ENCODE measurements at regions of chr9 and their contacts with region 1.

Region 1: DNA sequence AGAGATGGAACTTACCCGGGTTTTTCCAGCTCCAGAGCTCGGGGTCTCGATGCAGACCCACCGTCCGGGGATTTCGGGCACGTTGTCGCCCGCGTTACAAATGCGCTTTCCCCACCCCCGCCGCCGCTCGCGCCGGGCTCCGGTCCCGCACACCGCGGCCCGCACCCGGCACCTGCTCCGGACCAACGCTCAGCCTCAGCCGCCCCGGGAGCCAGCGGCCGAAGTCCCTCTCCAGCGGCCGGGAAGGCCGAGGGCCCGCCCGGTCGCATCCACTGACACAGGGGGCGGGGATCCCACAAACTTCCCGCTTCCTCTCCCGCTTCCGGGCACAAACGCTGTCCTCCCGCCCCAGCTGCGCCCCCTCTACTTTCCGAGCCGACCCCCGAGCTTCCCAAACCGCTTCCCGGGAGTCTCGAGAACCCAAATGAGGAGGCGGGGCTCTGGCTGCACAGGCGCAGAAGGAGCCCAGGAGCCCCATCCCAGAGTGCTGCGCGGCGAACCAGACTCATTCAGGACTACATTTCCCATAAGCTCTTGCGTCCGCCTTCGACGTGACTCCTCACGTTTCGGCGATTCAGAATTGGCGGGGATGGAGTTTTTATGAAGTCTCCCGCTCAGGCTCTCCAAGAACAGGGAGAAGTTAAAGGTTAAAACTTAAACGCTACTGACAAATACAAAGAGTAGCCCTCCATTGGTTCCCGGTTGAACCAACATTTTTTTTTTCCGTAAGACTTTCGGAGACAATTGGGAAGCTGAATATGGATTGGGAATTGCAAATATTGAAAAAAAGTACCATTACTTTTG is at the start of gene ZNF782:
- DNase-seq: peak; percentile 77 to 93
- ATAC-seq: peak; percentile 84 to 91 (median 91)
- H3K4me3 ChIP-seq: peak within 1 kb of the TSS; percentile 94
- H3K4me3 Mint-ChIP-seq: peak within 1 kb of the TSS; percentile 100
- H3K27ac ChIP-seq: peak within 1 kb of the TSS; percentile 74
- H3K27ac Mint-ChIP-seq: peak within 1 kb of the TSS; percentile 96 to 99
- H3K4me1 ChIP-seq: peaks cover 12% of the 10 kb centered on the region
- H3K4me1 Mint-ChIP-seq: peaks cover 33 to 37% of the 10 kb centered on the region in 2 donors
- H3K27me3 ChIP-seq: no peaks in the 10 kb centered on the region
- H3K27me3 Mint-ChIP-seq: peaks cover 0 to 4% of the 10 kb centered on the region in 2 donors
- CTCF ChIP-seq: no peak
- total RNA-seq, gene ZNF782: 7.3 to 10.1 (median 7.4) TPM

Region 2: GRCh38 chr9:96777426-96777864 is 76.8 kb before region 1 on chr9:
- intact Hi-C with region 1: loop called (anchors 5 kb)
- DNase-seq: no peak
- ATAC-seq: no peak
- H3K4me3 ChIP-seq: peak overlapping the region; percentile 73
- H3K4me3 Mint-ChIP-seq: peak overlapping the region; percentile 100
- H3K27ac ChIP-seq: peak overlapping the region; percentile 74
- H3K27ac Mint-ChIP-seq: peak overlapping the region; percentile 94 to 97
- H3K4me1 ChIP-seq: peaks cover 11% of the 10 kb centered on the region
- H3K4me1 Mint-ChIP-seq: peaks cover 26 to 42% of the 10 kb centered on the region in 2 donors
- H3K27me3 ChIP-seq: no peaks in the 10 kb centered on the region
- H3K27me3 Mint-ChIP-seq: no peaks in the 10 kb centered on the region
- CTCF ChIP-seq: no peak

Region 3: GRCh38 chr9:96875461-96876364 is 21.4 kb after region 1 on chr9:
- intact Hi-C with region 1: no loop called
- DNase-seq: peak in 1 of 2 donors; percentile 52
- ATAC-seq: peak in 2 of 3 donors; percentile 22 to 27
- H3K4me3 ChIP-seq: peak overlapping the region; percentile 26
- H3K4me3 Mint-ChIP-seq: peak overlapping the region; percentile 62
- H3K27ac ChIP-seq: peak overlapping the region; percentile 56
- H3K27ac Mint-ChIP-seq: no peak overlapping the region
- H3K4me1 ChIP-seq: peaks cover 9% of the 10 kb centered on the region
- H3K4me1 Mint-ChIP-seq: peaks cover 16 to 20% of the 10 kb centered on the region in 2 donors
- H3K27me3 ChIP-seq: peaks cover 34% of the 10 kb centered on the region
- H3K27me3 Mint-ChIP-seq: peaks cover 40 to 64% of the 10 kb centered on the region in 2 donors
- CTCF ChIP-seq: no peak

Region 4: GRCh38 chr9:97398999-97399758 is 544.9 kb after region 1 on chr9:
- intact Hi-C with region 1: loop called (anchors 1 kb)
- DNase-seq: peak; percentile 70 to 82
- ATAC-seq: peak; percentile 83 to 96 (median 94)
- H3K4me3 ChIP-seq: no peak overlapping the region
- H3K4me3 Mint-ChIP-seq: no peak overlapping the region
- H3K27ac ChIP-seq: no peak overlapping the region
- H3K27ac Mint-ChIP-seq: peak overlapping the region in 1 of 2 donors; percentile 40
- H3K4me1 ChIP-seq: peaks cover 33% of the 10 kb centered on the region
- H3K4me1 Mint-ChIP-seq: peaks cover 0 to 5% of the 10 kb centered on the region in 2 donors
- H3K27me3 ChIP-seq: no peaks in the 10 kb centered on the region
- H3K27me3 Mint-ChIP-seq: peaks cover 7 to 21% of the 10 kb centered on the region in 2 donors
- CTCF ChIP-seq: peak; percentile 89

Region 5: DNA sequence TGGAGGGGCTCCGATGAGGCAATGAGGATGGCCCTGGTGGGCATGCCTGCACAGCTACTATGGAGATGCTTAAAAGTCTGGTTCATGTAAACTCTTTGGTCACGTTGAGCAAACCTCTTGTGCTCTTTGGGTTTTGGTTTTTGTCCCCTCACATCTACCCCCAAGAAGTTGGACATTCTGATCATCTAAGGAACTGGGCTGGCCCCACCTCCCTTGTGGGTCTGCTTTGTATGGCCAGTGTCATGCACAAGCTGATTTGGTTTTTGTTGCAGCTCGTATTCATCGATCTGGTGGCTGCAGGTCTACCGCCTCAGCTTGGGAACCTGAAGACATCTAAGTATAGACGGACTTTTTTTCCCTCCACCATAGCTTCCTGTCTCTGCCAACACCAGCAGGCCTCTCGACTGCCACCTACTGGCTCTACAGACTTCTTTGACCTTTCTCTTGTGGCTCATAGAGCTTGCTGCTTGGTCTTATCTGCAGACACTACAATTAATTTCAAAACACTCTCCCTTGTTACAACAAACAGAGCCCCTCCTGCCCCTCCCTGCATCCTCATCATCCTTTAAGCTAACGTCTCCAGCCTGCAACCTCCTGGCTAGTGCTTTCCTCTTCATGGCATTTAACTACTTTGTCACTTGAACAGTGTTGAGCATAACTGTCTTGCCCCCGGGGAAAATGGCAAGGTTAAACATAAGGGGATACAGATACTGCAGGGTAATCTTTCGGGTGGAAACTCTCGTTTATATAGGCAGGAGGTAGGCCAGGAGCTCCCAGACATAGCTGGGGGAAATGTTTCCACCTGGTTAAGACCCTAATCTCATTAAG is 744.4 kb after region 1 on chr9:
- intact Hi-C with region 1: loop called (anchors 2 kb)
- DNase-seq: peak; percentile 43 to 86
- ATAC-seq: peak; percentile 90 to 97 (median 97)
- H3K4me3 ChIP-seq: no peak overlapping the region
- H3K4me3 Mint-ChIP-seq: peak overlapping the region; percentile 52
- H3K27ac ChIP-seq: no peak overlapping the region
- H3K27ac Mint-ChIP-seq: peak overlapping the region in 1 of 2 donors; percentile 60
- H3K4me1 ChIP-seq: peaks cover 6% of the 10 kb centered on the region
- H3K4me1 Mint-ChIP-seq: peaks cover 7 to 9% of the 10 kb centered on the region in 2 donors
- H3K27me3 ChIP-seq: no peaks in the 10 kb centered on the region
- H3K27me3 Mint-ChIP-seq: peaks cover 0 to 1% of the 10 kb centered on the region in 2 donors
- CTCF ChIP-seq: peak; percentile 81

Region 6: GRCh38 chr9:97615439-97616072 is 761.3 kb after region 1 on chr9:
- intact Hi-C with region 1: loop called (anchors 1 kb)
- DNase-seq: peak in 1 of 2 donors; percentile 79
- ATAC-seq: peak; percentile 68 to 83 (median 76)
- H3K4me3 ChIP-seq: no peak overlapping the region
- H3K4me3 Mint-ChIP-seq: no peak overlapping the region
- H3K27ac ChIP-seq: no peak overlapping the region
- H3K27ac Mint-ChIP-seq: no peak overlapping the region
- H3K4me1 ChIP-seq: no peaks in the 10 kb centered on the region
- H3K4me1 Mint-ChIP-seq: no peaks in the 10 kb centered on the region
- H3K27me3 ChIP-seq: no peaks in the 10 kb centered on the region
- H3K27me3 Mint-ChIP-seq: no peaks in the 10 kb centered on the region
- CTCF ChIP-seq: peak; percentile 88

Measured in natural killer cell (primary cell).